Activated CD4-positive, alpha-beta memory T cell treated with anti-CD3 and anti-CD28 coated beads for 36 hours (primary cell): ENCODE measurements at regions of chr2 and their contacts with region 1.

Region 1: GRCh38 chr2:136117909-136118818 is at the start of gene CXCR4:
- DNase-seq: peak; percentile 93
- H3K4me3 Mint-ChIP-seq: peak within 1 kb of the TSS; percentile 98
- H3K27ac Mint-ChIP-seq: peak within 1 kb of the TSS; percentile 98
- H3K4me1 Mint-ChIP-seq: peaks cover 54% of the 10 kb centered on the region
- H3K27me3 Mint-ChIP-seq: peaks cover 2% of the 10 kb centered on the region
- total RNA-seq, gene CXCR4: 139 to 141 TPM

Region 2: DNA sequence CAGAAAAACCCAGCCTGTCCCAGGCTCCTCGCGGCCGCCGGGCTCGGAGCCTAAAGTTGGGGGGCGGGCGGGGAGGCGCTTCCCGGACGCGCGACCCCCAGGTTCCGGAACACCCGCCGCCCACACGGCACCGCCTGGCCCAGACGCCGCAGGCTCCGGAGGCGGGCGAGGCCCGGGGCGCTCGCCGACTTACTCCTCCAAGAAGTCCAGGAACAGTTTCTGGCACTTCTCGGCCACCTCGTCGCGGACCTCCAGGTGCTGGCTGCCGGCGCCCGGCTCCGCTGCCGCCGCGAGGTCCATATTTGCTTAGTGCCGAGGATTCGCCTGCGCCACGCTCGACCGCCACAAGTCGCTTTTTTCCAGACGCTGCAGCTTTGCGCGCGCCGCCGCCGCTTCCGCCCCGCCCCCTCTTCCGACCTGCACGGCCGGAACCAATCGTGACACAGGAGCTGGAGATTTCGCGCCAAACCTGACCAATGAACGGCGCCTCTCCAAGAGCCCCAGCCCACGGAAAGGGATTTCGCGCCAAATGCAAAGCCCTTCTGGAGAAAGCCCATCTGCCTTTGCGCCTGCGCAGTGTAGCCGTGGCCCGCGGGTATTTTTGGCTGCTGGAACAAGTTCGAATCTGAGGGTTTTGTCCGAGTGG is 242.0 kb before region 1 on chr2 and contains the start of gene MCM6:
- CTCF ChIA-PET with region 1: no interaction called
- POLR2A ChIA-PET with region 1: no interaction called
- intact Hi-C with region 1: loop called (anchors 1 kb)
- DNase-seq: peak; percentile 100
- H3K4me3 Mint-ChIP-seq: peak within 1 kb of the TSS; percentile 90
- H3K27ac Mint-ChIP-seq: peak within 1 kb of the TSS; percentile 98
- H3K4me1 Mint-ChIP-seq: peaks cover 39% of the 10 kb centered on the region
- H3K27me3 Mint-ChIP-seq: peaks cover 2% of the 10 kb centered on the region
- total RNA-seq, gene MCM6: 280 to 284 TPM

Region 3: GRCh38 chr2:135948642-135949355 is 169.4 kb before region 1 on chr2:
- CTCF ChIA-PET with region 1: no interaction called
- POLR2A ChIA-PET with region 1: interaction called, 3 read pairs
- intact Hi-C with region 1: loop called (anchors 1 kb)
- DNase-seq: peak; percentile 55
- H3K4me3 Mint-ChIP-seq: peak overlapping the region; percentile 53
- H3K27ac Mint-ChIP-seq: peak overlapping the region; percentile 87
- H3K4me1 Mint-ChIP-seq: peaks cover 64% of the 10 kb centered on the region
- H3K27me3 Mint-ChIP-seq: no peaks in the 10 kb centered on the region

Region 4: GRCh38 chr2:136052369-136053362 is 65.5 kb before region 1 on chr2:
- CTCF ChIA-PET with region 1: no interaction called
- POLR2A ChIA-PET with region 1: interaction called, 11 read pairs
- intact Hi-C with region 1: loop called (anchors 1 kb)
- DNase-seq: peak; percentile 35
- H3K4me3 Mint-ChIP-seq: peak overlapping the region; percentile 57
- H3K27ac Mint-ChIP-seq: peak overlapping the region; percentile 99
- H3K4me1 Mint-ChIP-seq: peaks cover 86% of the 10 kb centered on the region
- H3K27me3 Mint-ChIP-seq: no peaks in the 10 kb centered on the region

Region 5: GRCh38 chr2:136098441-136098840 is 19.7 kb before region 1 on chr2:
- CTCF ChIA-PET with region 1: no interaction called
- POLR2A ChIA-PET with region 1: no interaction called
- intact Hi-C with region 1: no loop called
- DNase-seq: no peak
- H3K4me3 Mint-ChIP-seq: no peak overlapping the region
- H3K27ac Mint-ChIP-seq: no peak overlapping the region
- H3K4me1 Mint-ChIP-seq: peaks cover 7% of the 10 kb centered on the region
- H3K27me3 Mint-ChIP-seq: no peaks in the 10 kb centered on the region

Region 6: GRCh38 chr2:136129601-136130000 is 11.4 kb after region 1 on chr2:
- CTCF ChIA-PET with region 1: interaction called, 6 read pairs
- POLR2A ChIA-PET with region 1: interaction called, 11 read pairs
- intact Hi-C with region 1: loop called (anchors 1 kb)
- DNase-seq: peak; percentile 36
- H3K4me3 Mint-ChIP-seq: peak overlapping the region; percentile 52
- H3K27ac Mint-ChIP-seq: peak overlapping the region; percentile 81
- H3K4me1 Mint-ChIP-seq: peaks cover 94% of the 10 kb centered on the region
- H3K27me3 Mint-ChIP-seq: peaks cover 3% of the 10 kb centered on the region

Region 7: GRCh38 chr2:136168720-136169119 is 50.6 kb after region 1 on chr2:
- CTCF ChIA-PET with region 1: no interaction called
- POLR2A ChIA-PET with region 1: no interaction called
- intact Hi-C with region 1: no loop called
- DNase-seq: no peak
- H3K4me3 Mint-ChIP-seq: no peak overlapping the region
- H3K27ac Mint-ChIP-seq: no peak overlapping the region
- H3K4me1 Mint-ChIP-seq: peaks cover 6% of the 10 kb centered on the region
- H3K27me3 Mint-ChIP-seq: no peaks in the 10 kb centered on the region

Region 8: GRCh38 chr2:136238286-136239078 is 120.3 kb after region 1 on chr2:
- CTCF ChIA-PET with region 1: no interaction called
- POLR2A ChIA-PET with region 1: no interaction called
- intact Hi-C with region 1: loop called (anchors 2 kb)
- DNase-seq: peak; percentile 61
- H3K4me3 Mint-ChIP-seq: no peak overlapping the region
- H3K27ac Mint-ChIP-seq: peak overlapping the region; percentile 93
- H3K4me1 Mint-ChIP-seq: peaks cover 64% of the 10 kb centered on the region
- H3K27me3 Mint-ChIP-seq: no peaks in the 10 kb centered on the region

Region 9: GRCh38 chr2:136378712-136379595 is 260.8 kb after region 1 on chr2:
- CTCF ChIA-PET with region 1: interaction called, 7 read pairs
- POLR2A ChIA-PET with region 1: interaction called, 11 read pairs
- intact Hi-C with region 1: loop called (anchors 1 kb)
- DNase-seq: peak; percentile 88
- H3K4me3 Mint-ChIP-seq: no peak overlapping the region
- H3K27ac Mint-ChIP-seq: peak overlapping the region; percentile 44
- H3K4me1 Mint-ChIP-seq: peaks cover 87% of the 10 kb centered on the region
- H3K27me3 Mint-ChIP-seq: no peaks in the 10 kb centered on the region